OCI-LY7 (cell line): ENCODE measurements at regions of chr4 and their contacts with region 1.

Region 1: DNA sequence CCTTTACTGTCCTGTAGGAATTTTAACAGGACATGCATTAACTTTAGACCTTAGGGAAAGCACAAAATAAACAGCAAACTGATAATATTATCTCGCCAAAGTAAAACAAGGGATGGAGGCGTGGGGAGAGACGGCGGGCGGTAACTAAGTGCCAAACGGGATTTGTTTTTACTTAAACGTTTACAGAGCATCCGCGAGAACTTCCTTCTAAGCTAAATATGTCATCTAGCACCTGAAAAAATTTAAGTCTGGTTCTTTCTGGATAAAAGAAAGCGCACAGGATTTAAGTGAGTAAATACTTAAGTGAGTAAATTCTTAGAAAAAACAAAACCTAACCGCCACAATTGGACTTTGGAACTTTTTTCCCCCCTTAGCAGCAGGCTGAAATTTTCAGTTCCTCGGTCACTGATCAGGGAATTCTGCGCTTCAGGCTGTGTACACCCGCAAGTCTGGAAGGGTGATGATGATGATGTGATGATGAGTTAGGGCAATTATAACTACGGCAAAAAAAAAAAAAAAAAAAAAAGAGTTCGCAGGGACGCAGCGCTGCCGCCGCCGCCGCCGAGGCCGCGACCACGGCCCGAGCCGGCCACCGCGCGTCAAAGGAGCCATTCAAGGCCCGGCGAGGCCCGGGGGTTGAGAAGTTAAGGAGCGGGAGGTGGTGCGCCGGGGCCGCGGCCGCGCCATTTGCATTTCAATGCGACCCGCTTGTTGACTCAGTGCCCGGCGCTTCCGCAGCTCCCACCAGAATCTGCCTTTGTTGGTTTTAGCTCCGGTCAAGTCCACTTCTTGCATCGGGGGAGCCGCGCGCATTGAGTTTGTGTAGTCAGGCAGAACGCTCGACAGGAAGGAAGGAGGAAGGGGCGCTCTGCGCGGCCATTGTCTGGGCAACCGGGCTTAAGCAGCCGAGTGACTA is 108.8 kb downstream of the SPRY1 start:
- DNase-seq: peak; percentile 95
- H3K4me3 ChIP-seq: peak overlapping the region; percentile 66
- H3K27ac ChIP-seq: peak overlapping the region; percentile 83
- H3K4me1 ChIP-seq: peaks cover 40% of the 10 kb centered on the region
- CTCF ChIP-seq: no peak

Region 2: GRCh38 chr4:123444290-123444731 is 61.0 kb before region 1 on chr4:
- CTCF ChIA-PET with region 1: no interaction called
- POLR2A ChIA-PET with region 1: interaction called, 3 read pairs
- intact Hi-C with region 1: loop called (anchors 1 kb)
- DNase-seq: peak; percentile 91
- H3K4me3 ChIP-seq: peak overlapping the region; percentile 61
- H3K27ac ChIP-seq: peak overlapping the region; percentile 97
- H3K4me1 ChIP-seq: peaks cover 78% of the 10 kb centered on the region
- CTCF ChIP-seq: no peak

Region 3: DNA sequence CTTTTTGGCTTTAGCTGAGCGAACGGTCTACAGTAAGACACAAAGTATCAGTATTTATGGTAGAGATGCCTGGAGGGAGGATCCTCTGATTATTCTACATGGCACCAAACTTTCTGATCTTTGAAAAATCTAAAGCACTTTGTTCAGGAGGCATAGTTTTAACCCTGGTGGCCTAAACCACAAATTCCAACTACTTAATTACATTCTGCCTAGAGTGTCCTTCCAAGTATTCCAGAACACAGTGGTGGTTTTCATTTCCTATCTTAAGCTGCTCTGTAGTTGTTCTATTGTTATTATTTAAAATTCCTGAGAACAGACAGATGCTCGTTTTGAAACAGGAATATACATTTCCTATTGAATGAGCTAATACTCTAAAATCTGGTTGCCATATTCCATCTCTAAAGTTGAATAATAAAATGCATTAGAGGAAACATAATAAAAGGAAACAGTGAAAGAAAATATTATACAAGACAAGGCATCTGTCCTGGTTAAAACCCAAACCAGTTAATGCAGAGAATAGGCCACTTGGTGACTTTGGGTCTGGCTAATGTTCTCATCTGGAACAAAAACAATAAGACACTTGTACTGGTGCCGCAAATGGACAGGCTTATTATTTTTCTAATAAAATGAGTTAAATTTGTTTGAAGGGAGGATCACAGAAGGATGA is 548.7 kb after region 1 on chr4:
- CTCF ChIA-PET with region 1: no interaction called
- POLR2A ChIA-PET with region 1: no interaction called
- intact Hi-C with region 1: no loop called
- DNase-seq: no peak
- H3K4me3 ChIP-seq: no peak overlapping the region
- H3K27ac ChIP-seq: no peak overlapping the region
- H3K4me1 ChIP-seq: no peaks in the 10 kb centered on the region
- CTCF ChIP-seq: no peak